IMR-90 (cell line): ENCODE measurements at regions of chr1 and their contacts with region 1.

Region 1: DNA sequence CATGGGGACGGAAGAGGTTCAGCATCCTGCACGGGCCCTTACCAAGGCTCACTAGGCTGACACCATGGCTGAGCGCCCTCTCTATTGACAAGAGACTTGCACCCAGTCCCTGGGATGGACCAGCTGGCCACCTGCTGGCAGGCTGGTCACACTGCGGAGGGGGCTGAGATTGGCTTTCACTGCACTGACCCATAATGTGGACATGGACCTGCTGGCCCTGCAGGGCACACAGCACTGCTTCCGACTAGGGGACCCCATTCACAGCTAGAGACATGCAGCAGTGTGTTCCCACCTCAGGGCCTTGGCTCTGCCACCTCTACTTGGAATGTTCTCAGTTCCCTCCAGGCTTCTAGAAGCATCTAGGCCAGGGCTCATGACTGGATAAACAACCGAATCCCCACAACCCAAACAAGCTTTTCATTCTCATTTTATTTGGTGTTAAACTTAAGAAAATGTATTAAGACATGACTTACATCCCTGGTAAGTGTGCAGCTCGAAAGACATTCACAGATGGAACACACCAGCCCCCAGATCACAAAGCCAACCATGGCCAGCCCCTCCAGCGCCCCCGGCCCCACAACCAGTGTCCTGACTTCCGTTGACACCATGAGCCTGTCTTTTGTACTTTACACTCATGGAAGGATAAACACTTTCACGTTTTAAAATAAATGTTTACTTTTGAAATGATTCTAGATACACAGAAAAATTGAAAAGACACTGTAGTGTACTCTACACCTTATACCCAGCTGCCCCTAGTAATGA is 9.3 kb upstream of the SRARP start:
- DNase-seq: peak; percentile 56
- ATAC-seq: peak; percentile 99
- H3K4me3 ChIP-seq: no peak overlapping the region
- H3K27ac ChIP-seq: no peak overlapping the region
- H3K4me1 ChIP-seq: peaks cover 2% of the 10 kb centered on the region; the same call in 1 of the 2 replicates
- H3K27me3 ChIP-seq: peaks cover 13% of the 10 kb centered on the region; the same call in 1 of the 2 replicates
- CTCF ChIP-seq: peak; percentile 90
- POLR2A ChIP-seq: no peak
- RAD21 ChIP-seq: peak; percentile 91

Region 2: GRCh38 chr1:15820478-15820877 is 174.3 kb before region 1 on chr1:
- CTCF ChIA-PET with region 1: interaction called, 6 read pairs
- POLR2A ChIA-PET with region 1: interaction called, 6 read pairs
- dilution Hi-C with region 1: no loop called
- in situ Hi-C with region 1: loop called (anchors 5 kb)
- intact Hi-C with region 1: loop called (anchors 2 kb)
- DNase-seq: peak; percentile 44
- ATAC-seq: peak; percentile 72
- H3K4me3 ChIP-seq: no peak overlapping the region
- H3K27ac ChIP-seq: no peak overlapping the region
- H3K4me1 ChIP-seq: no peaks in the 10 kb centered on the region
- H3K27me3 ChIP-seq: no peaks in the 10 kb centered on the region
- CTCF ChIP-seq: no peak
- POLR2A ChIP-seq: no peak
- RAD21 ChIP-seq: no peak

Region 3: DNA sequence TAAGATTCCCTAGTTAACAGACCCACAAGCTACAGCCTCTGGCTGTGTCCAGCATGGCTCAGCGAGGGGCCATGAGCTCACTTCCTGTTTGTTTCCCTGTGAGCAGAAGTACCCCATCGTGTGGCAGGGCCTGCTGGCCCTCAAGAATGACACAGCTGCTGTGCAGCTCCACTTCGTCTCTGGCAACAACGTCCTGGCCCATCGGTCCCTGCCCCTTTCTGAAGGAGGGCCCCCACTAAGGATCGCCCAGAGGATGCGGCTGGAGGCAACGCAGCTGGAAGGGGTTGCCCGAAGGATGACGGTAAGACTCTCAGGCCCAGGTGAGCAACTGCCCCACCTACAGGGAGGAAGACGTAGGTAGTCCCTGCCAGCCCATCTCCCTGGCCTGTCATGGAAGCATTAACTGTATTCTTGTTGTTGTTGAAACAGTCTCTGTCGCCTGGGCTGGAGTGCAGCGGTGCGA is 57.0 kb before region 1 on chr1:
- CTCF ChIA-PET with region 1: no interaction called
- POLR2A ChIA-PET with region 1: no interaction called
- dilution Hi-C with region 1: no loop called
- in situ Hi-C with region 1: loop called (anchors 10 kb)
- intact Hi-C with region 1: loop called (anchors 1 kb)
- DNase-seq: peak; percentile 66
- ATAC-seq: peak; percentile 30; the same call in 1 of the 2 replicates
- H3K4me3 ChIP-seq: no peak overlapping the region
- H3K27ac ChIP-seq: peak overlapping the region; percentile 60
- H3K4me1 ChIP-seq: peaks cover 14% of the 10 kb centered on the region
- H3K27me3 ChIP-seq: no peaks in the 10 kb centered on the region
- CTCF ChIP-seq: 0 out of 2 replicates have a peak, but pooled peaks have one; percentile 25
- POLR2A ChIP-seq: no peak
- RAD21 ChIP-seq: peak; percentile 34